ENCODE measurements at regions of chr7 and their contacts with region 1.

Region 1: DNA sequence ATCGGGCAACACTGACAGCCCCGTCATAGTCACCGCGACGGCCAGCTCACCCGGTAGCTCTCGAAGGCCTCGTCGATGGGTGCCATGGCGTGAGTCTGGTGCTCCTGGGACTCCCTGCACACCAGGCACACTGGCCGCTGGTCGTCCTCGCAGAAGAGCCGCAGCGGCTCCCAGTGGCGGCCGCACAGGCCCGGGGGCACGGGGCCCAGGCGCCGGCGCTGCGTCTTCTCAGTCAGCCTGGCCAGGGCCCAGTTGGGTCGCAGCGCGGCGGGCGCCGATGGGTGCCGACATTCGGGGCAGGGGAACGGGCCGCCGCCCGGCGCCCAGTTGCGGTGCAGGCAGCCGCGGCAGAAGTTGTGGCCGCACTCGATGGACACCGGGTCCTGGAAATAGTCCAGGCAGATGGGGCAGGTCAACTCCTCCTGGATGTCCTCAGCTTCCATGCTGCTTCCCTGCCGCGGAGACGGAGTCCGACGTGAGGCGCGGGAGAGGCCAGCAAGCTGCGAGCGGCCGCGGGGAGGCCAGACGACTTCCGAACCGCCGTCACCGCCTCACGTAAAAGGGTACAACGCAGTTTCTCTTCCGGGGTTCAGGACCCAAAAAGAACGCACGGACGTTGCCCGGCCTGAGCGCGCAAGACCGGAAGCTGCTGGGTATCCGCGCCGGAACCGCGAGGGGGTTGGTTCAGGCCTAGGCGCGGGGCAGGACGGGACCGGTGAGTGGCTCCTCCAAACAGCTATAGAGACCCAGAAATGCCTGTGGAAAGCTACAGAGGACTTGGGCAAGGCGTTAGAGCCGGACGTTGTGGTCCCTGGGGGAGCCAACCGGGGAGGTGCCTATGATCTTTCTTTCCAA is at the start of gene TRIM4:
- DNase-seq: peak; percentile 85
- ATAC-seq: peak; percentile 100
- H3K4me3 ChIP-seq: peak within 1 kb of the TSS; percentile 60 to 86
- H3K27ac ChIP-seq: peak within 1 kb of the TSS; percentile 90
- H3K4me1 ChIP-seq: peaks cover 9 to 16% of the 10 kb centered on the region in 2 experiments
- H3K27me3 ChIP-seq: no peaks in the 10 kb centered on the region
- CTCF ChIP-seq: no peak; a peak in 1 of 6 replicates
- POLR2A ChIP-seq: peak; percentile 37
- RAD21 ChIP-seq: 0 out of 2 replicates have a peak, but pooled peaks have one; percentile 15
- total RNA-seq, gene TRIM4: 25.1 TPM

Region 2: GRCh38 chr7:99525713-99526440 is 393.3 kb before region 1 on chr7:
- CTCF ChIA-PET with region 1: interaction called, 5 read pairs
- POLR2A ChIA-PET with region 1: no interaction called
- RAD21 ChIA-PET with region 1: interaction called in 1 of 2 experiments, 3 read pairs
- intact Hi-C with region 1: loop called (anchors 10 kb)
- DNase-seq: peak; percentile 13
- ATAC-seq: peak; percentile 74
- H3K4me3 ChIP-seq: no peak overlapping the region
- H3K27ac ChIP-seq: no peak overlapping the region
- H3K4me1 ChIP-seq: no peaks in the 10 kb centered on the region
- H3K27me3 ChIP-seq: no peaks in the 10 kb centered on the region
- CTCF ChIP-seq: peak; percentile 36 to 64 (median 43); a peak in 4 of 6 replicates
- POLR2A ChIP-seq: no peak
- RAD21 ChIP-seq: peak; percentile 76

Measured in HCT116 (cell line).